Astrocyte of the cerebellum (primary cell): ENCODE measurements at regions of chr3 and their contacts with region 1.

Region 1: DNA sequence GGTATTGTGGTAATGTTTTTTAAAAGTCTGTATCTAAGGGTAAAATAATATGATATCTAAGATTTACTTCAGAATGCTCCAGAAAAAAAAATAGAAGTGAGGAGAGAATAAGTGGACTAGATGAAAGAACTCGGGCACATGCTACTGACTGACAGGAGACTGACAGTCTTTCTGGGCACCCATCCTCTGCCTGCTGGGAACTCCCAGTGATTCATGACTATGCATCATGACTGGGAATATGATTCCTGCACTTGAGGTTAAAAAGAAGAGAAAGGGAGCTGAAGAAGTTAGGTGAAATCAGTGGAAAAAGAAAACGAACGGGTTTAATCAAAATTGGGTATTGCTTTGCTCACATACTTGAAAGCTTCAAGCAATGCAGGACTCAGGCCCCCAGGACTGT is 35.7 kb upstream of the SPSB4 start:
- DNase-seq: no peak
- H3K4me3 ChIP-seq: no peak overlapping the region
- CTCF ChIP-seq: no peak

Region 2: DNA sequence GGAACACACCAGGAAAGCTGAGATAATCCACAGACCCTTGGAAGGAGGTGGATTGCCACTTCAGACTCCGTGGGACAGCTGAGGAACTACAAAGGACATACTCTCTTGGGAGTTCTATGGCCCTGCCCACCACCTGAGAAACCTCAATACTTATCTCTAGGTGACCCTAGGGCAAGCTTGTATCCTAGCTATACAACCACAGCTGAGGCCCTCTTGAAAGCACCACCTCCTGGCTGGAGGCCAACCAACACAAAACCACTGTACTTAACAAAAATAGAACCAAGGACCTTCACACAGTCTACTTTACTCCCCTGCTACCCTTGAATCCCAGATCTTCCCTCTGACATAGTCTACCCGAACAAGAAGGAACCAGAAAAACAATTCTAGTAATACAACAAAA is 398.3 kb before region 1 on chr3:
- in situ Hi-C with region 1: no loop called
- DNase-seq: no peak
- H3K4me3 ChIP-seq: no peak overlapping the region
- CTCF ChIP-seq: no peak

Region 3: GRCh38 chr3:141050576-141051442 is 35.3 kb after region 1 on chr3 and contains the start of gene SPSB4:
- in situ Hi-C with region 1: no loop called
- DNase-seq: no peak
- H3K4me3 ChIP-seq: peak within 1 kb of the TSS; percentile 38
- CTCF ChIP-seq: no peak

Region 4: DNA sequence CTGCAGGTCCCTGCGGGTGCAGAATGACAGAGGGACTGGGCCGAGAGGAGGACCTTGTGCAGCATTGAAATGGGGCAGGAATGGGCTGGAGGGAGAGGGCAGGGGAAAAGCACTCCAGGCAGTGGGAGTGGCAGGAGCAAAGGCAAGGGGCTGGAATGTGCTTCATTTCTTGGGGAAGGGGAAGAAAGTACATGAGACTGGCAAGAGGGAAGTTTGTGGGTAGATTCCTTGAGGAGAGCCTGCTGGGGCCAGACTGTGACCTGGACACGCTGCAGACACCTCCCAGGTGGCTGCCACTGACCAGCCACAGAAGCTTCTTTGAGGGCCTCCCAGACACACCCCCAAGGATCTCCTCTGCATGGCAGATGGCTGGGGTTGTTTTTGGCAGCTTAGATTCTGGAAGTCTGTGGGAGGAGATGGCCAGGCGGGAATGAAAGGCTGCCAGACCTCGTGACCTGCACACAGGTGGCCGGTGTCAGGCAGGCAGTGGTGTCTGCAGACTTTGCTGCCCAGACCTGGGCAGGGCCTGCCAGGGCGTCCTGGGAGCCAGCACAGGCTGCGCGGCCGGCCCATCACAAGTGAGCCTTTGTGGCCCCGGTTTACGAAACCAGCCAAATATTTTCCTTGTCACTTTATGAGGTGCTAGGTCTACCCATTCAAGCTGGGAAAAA is 88.8 kb after region 1 on chr3:
- in situ Hi-C with region 1: loop called (anchors 5 kb)
- DNase-seq: no peak
- H3K4me3 ChIP-seq: no peak overlapping the region
- CTCF ChIP-seq: no peak